ENCODE measurements at regions of chr19 and their contacts with region 1.

Region 1: GRCh38 chr19:44689056-44689895 is 9.7 kb upstream of the CEACAM16 start:
- DNase-seq: no peak
- ATAC-seq: peak; percentile 86
- H3K4me3 ChIP-seq: no peak overlapping the region
- H3K27ac ChIP-seq: peak overlapping the region; percentile 70
- H3K4me1 ChIP-seq: peaks cover 19% of the 10 kb centered on the region
- H3K27me3 ChIP-seq: no peaks in the 10 kb centered on the region
- CTCF ChIP-seq: peak; percentile 90

Region 2: DNA sequence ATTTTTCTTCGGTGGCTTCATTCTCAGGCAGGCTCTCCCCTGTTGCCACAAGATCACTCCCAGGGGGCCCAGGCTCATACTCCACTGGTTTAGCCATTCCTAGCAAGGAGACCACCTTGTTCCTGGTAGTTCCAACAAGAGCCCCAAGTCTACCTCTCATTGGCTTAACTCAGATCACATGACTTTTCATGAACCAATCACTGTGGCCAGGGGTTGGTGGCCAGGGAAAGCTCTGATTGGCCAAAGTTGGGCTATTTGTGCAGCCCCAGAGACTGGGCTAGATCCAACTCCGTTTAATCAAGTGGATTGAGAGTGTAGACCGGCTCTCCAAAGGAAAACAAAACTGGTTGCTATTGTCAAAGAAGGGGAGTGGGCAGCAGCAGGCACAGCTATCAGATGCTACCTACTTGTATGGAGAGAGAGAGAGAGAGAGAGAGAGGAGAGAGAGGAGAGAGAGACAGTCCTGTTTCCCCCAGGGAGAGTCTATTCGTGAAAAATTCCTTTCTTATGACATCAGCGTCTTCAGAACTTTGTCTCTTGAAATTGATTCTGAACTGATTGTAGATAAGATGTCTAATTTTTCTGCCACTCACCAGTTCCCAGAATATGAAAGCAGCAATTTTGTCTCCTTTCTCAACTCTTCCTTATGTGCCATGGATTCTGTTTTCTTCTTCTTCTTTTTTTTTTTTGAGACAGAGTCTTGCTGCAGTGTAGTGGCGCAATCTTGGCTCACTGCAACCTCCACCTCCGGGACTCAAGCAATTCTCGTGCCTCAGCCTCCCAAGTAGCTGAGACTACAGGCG is 12.1 kb before region 1 on chr19:
- CTCF ChIA-PET with region 1: no interaction called
- POLR2A ChIA-PET with region 1: no interaction called
- in situ Hi-C with region 1: no loop called
- intact Hi-C with region 1: no loop called
- DNase-seq: no peak
- ATAC-seq: 0 out of 2 replicates have a peak, but pooled peaks have one; percentile 23
- H3K4me3 ChIP-seq: no peak overlapping the region
- H3K27ac ChIP-seq: no peak overlapping the region
- H3K4me1 ChIP-seq: no peaks in the 10 kb centered on the region; the same call in 1 of the 2 replicates
- H3K27me3 ChIP-seq: no peaks in the 10 kb centered on the region
- CTCF ChIP-seq: no peak

Region 3: GRCh38 chr19:44701228-44701627 is 12.0 kb after region 1 on chr19:
- CTCF ChIA-PET with region 1: interaction called, 10 read pairs
- POLR2A ChIA-PET with region 1: interaction called, 3 read pairs
- in situ Hi-C with region 1: no loop called
- intact Hi-C with region 1: no loop called
- DNase-seq: no peak
- ATAC-seq: no peak
- H3K4me3 ChIP-seq: no peak overlapping the region
- H3K27ac ChIP-seq: no peak overlapping the region
- H3K4me1 ChIP-seq: no peaks in the 10 kb centered on the region
- H3K27me3 ChIP-seq: no peaks in the 10 kb centered on the region
- CTCF ChIP-seq: no peak

Region 4: GRCh38 chr19:44723952-44724319 is 34.7 kb after region 1 on chr19:
- CTCF ChIA-PET with region 1: interaction called, 22 read pairs
- POLR2A ChIA-PET with region 1: no interaction called
- in situ Hi-C with region 1: no loop called
- intact Hi-C with region 1: loop called (anchors 5 kb)
- DNase-seq: peak; percentile 73
- ATAC-seq: peak; percentile 81
- H3K4me3 ChIP-seq: no peak overlapping the region
- H3K27ac ChIP-seq: peak overlapping the region; percentile 77
- H3K4me1 ChIP-seq: peaks cover 41% of the 10 kb centered on the region
- H3K27me3 ChIP-seq: no peaks in the 10 kb centered on the region
- CTCF ChIP-seq: peak; percentile 94

Region 5: DNA sequence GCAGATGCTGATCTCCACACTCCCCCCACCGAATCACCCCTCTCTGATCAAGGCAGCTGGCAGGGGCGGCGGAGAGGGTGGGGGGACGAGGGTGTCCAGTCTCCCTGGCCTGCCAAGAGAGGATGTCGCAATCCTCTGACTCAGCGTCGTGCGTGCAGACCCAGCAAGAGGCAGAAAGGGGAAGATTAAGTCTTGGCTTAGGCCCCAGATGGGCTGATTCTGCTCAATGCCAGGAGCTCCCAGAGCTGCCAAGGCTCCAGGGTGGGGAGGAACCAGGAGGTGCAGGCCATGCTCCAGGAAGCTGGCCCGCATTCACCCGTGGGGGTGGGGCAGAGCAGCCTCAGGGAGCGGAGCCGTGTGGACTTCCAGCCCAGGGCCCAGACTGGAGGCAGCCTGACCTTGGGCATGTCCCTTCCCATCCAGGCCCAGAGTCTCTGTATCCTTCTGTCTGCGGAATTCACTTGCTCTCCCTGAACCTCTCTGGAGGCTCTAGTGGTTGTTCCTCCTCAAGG is 52.6 kb after region 1 on chr19:
- CTCF ChIA-PET with region 1: interaction called, 3 read pairs
- POLR2A ChIA-PET with region 1: interaction called, 13 read pairs
- in situ Hi-C with region 1: no loop called
- intact Hi-C with region 1: no loop called
- DNase-seq: peak; percentile 89
- ATAC-seq: peak; percentile 90
- H3K4me3 ChIP-seq: no peak overlapping the region
- H3K27ac ChIP-seq: peak overlapping the region; percentile 90
- H3K4me1 ChIP-seq: peaks cover 64% of the 10 kb centered on the region
- H3K27me3 ChIP-seq: no peaks in the 10 kb centered on the region
- CTCF ChIP-seq: no peak

Region 6: GRCh38 chr19:44903602-44904425 is 214.5 kb after region 1 on chr19:
- CTCF ChIA-PET with region 1: interaction called, 15 read pairs
- POLR2A ChIA-PET with region 1: no interaction called
- in situ Hi-C with region 1: no loop called
- intact Hi-C with region 1: no loop called
- DNase-seq: no peak
- ATAC-seq: peak; percentile 62
- H3K4me3 ChIP-seq: no peak overlapping the region
- H3K27ac ChIP-seq: peak overlapping the region; percentile 70; the same call in 1 of the 2 replicates
- H3K4me1 ChIP-seq: peaks cover 9% of the 10 kb centered on the region
- H3K27me3 ChIP-seq: no peaks in the 10 kb centered on the region
- CTCF ChIP-seq: peak; percentile 98